Mammary epithelial cell (primary cell): ENCODE measurements at regions of chr4 and their contacts with region 1.

Region 1: DNA sequence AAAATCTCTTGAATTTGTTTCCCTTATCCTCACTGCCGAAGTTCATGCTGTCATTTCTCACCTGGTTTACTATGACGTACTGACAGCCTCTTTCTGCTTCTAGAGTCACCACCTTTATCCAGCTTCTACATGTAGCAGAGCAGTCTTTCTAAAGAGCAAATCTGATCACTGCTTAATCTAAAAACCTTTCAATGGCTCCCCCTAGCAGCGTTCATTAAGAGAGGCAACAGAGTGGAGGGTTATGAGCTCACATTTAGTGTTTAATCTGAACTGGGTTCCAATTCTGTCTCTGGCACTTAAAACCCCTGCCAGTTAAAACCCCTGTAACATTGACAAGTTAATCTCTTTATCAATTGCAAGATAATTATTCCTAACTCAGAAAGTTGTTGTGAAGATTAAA is 4.4 kb downstream of the RBPJ start:
- DNase-seq: peak; percentile 35
- H3K4me3 ChIP-seq: no peak overlapping the region
- H3K27ac ChIP-seq: no peak overlapping the region
- H3K4me1 ChIP-seq: peaks cover 21% of the 10 kb centered on the region
- H3K27me3 ChIP-seq: no peaks in the 10 kb centered on the region
- CTCF ChIP-seq: peak in 1 of 2 donors; percentile 65

Region 2: GRCh38 chr4:25993395-25994185 is 331.6 kb before region 1 on chr4:
- CTCF ChIA-PET with region 1: no interaction called
- dilution Hi-C with region 1: no loop called
- in situ Hi-C with region 1: loop called in 1 of 2 experiments (anchors 10 kb)
- intact Hi-C with region 1: loop called (anchors 1 kb)
- DNase-seq: no peak
- H3K4me3 ChIP-seq: no peak overlapping the region
- H3K27ac ChIP-seq: no peak overlapping the region
- H3K4me1 ChIP-seq: no peaks in the 10 kb centered on the region
- H3K27me3 ChIP-seq: no peaks in the 10 kb centered on the region
- CTCF ChIP-seq: no peak

Region 3: GRCh38 chr4:26061248-26061986 is 263.8 kb before region 1 on chr4:
- CTCF ChIA-PET with region 1: interaction called, 5 read pairs
- dilution Hi-C with region 1: no loop called
- in situ Hi-C with region 1: no loop called
- intact Hi-C with region 1: loop called (anchors 1 kb)
- DNase-seq: peak; percentile 32
- H3K4me3 ChIP-seq: no peak overlapping the region
- H3K27ac ChIP-seq: no peak overlapping the region
- H3K4me1 ChIP-seq: peaks cover 4% of the 10 kb centered on the region
- H3K27me3 ChIP-seq: peaks cover 6% of the 10 kb centered on the region
- CTCF ChIP-seq: peak; percentile 49 to 64